Calu3 (cell line): ENCODE measurements at regions of chr9 and their contacts with region 1.

Region 1: DNA sequence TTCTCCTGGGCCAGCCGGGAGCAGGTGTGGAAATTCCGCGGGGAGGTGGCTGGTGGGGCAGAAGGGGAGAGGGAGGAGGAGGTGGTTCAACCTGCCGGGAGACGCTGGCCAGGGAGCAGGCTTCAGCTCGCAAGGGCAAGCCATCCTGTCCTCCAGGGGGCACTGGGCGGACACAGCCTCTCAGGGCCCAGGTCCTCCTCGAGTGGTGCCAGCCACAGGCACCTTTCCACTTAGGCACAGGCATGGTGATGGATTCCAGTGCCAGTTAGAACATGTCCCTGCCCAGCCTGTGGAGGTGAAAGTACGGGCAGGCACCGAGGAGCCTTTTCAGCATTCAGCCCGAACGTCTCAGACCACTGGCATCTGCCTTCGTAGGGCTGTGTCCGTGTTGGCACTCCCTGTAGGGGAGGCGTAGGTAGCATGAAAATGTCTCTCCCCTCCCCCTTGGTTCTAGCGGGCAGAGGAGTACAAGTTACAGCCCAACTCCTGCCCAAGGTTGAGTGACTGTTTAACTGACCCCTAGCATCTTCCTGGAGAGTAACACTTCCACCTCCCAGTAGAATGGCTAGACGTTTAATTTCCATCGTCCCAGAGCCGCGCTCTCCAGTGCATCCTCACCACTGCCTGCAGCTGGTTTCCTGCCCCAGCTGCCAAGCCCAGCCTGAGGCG is 48.9 kb downstream of the DAB2IP start:
- DNase-seq: peak; percentile 77
- H3K4me3 Mint-ChIP-seq: peak overlapping the region; percentile 81
- H3K27ac Mint-ChIP-seq: no peak overlapping the region
- H3K4me1 Mint-ChIP-seq: peaks cover 8% of the 10 kb centered on the region
- H3K27me3 Mint-ChIP-seq: no peaks in the 10 kb centered on the region
- CTCF ChIP-seq: peak; percentile 53

Region 2: GRCh38 chr9:121735065-121735789 is 34.9 kb after region 1 on chr9:
- CTCF ChIA-PET with region 1: interaction called, 4 read pairs
- intact Hi-C with region 1: loop called (anchors 5 kb)
- DNase-seq: peak; percentile 60
- H3K4me3 Mint-ChIP-seq: peak overlapping the region; percentile 85
- H3K27ac Mint-ChIP-seq: peak overlapping the region; percentile 60
- H3K4me1 Mint-ChIP-seq: peaks cover 56% of the 10 kb centered on the region
- H3K27me3 Mint-ChIP-seq: no peaks in the 10 kb centered on the region
- CTCF ChIP-seq: peak; percentile 40

Region 3: GRCh38 chr9:121972501-121972981 is 272.2 kb after region 1 on chr9:
- CTCF ChIA-PET with region 1: no interaction called
- intact Hi-C with region 1: no loop called
- DNase-seq: peak; percentile 79
- H3K4me3 Mint-ChIP-seq: peak overlapping the region; percentile 36
- H3K27ac Mint-ChIP-seq: peak overlapping the region; percentile 89
- H3K4me1 Mint-ChIP-seq: peaks cover 29% of the 10 kb centered on the region
- H3K27me3 Mint-ChIP-seq: no peaks in the 10 kb centered on the region
- CTCF ChIP-seq: no peak